PC-3 (cell line): ENCODE measurements at regions of chr17 and their contacts with region 1.

Region 1: DNA sequence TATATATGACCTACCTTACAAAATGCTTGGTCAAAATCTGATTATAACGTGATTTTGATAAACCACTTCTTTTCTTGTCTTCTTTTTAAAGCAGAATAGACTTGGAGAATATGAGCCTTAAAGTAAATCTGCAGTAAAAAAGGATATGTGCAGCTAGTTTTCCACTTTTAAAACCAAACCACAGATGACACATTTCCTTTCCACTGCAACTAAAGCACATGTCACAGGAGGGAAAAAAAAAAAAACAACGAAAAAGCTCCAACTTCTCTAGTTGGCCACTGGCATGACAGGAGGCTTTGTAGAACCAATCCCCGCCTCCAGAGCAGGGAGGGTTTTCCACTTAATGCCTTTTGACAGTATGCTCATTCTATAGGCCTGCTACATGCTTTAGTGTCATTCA is at the start of gene EVI2A:
- DNase-seq: peak; percentile 69
- ATAC-seq: peak; percentile 72
- H3K4me3 ChIP-seq: no peak within 1 kb of the TSS
- H3K27ac ChIP-seq: peak within 1 kb of the TSS; percentile 59
- H3K4me1 ChIP-seq: peaks cover 18% of the 10 kb centered on the region
- H3K27me3 ChIP-seq: no peaks in the 10 kb centered on the region
- CTCF ChIP-seq: no peak
- total RNA-seq, gene EVI2A: 0.92 TPM in 1 of 2 replicates, not detected in the other

Region 2: GRCh38 chr17:31175237-31175636 is 146.2 kb before region 1 on chr17:
- CTCF ChIA-PET with region 1: no interaction called
- POLR2A ChIA-PET with region 1: no interaction called
- intact Hi-C with region 1: no loop called
- DNase-seq: no peak
- ATAC-seq: no peak
- H3K4me3 ChIP-seq: no peak overlapping the region
- H3K27ac ChIP-seq: no peak overlapping the region
- H3K4me1 ChIP-seq: no peaks in the 10 kb centered on the region
- H3K27me3 ChIP-seq: no peaks in the 10 kb centered on the region
- CTCF ChIP-seq: no peak

Region 3: DNA sequence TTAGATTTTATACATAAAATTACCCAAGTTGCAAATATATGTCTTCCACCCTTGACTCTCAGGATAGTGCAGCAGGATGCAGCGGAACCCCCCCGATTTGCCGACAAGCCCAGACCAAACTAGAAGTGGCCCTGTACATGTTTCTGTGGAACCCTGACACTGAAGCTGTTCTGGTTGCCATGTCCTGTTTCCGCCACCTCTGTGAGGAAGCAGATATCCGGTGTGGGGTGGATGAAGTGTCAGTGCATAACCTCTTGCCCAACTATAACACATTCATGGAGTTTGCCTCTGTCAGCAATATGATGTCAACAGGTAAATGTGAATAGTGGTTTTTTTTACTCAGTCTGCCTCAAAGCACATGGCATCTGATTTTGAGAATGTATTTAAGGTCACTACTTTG is 95.1 kb before region 1 on chr17:
- CTCF ChIA-PET with region 1: no interaction called
- POLR2A ChIA-PET with region 1: no interaction called
- intact Hi-C with region 1: no loop called
- DNase-seq: no peak
- ATAC-seq: no peak
- H3K4me3 ChIP-seq: no peak overlapping the region
- H3K27ac ChIP-seq: no peak overlapping the region
- H3K4me1 ChIP-seq: no peaks in the 10 kb centered on the region
- H3K27me3 ChIP-seq: no peaks in the 10 kb centered on the region
- CTCF ChIP-seq: no peak

Region 4: GRCh38 chr17:31248986-31249834 is 72.3 kb before region 1 on chr17:
- CTCF ChIA-PET with region 1: no interaction called
- POLR2A ChIA-PET with region 1: no interaction called
- intact Hi-C with region 1: loop called (anchors 5 kb)
- DNase-seq: peak; percentile 70
- ATAC-seq: peak; percentile 96
- H3K4me3 ChIP-seq: no peak overlapping the region
- H3K27ac ChIP-seq: peak overlapping the region; percentile 48
- H3K4me1 ChIP-seq: peaks cover 30% of the 10 kb centered on the region
- H3K27me3 ChIP-seq: no peaks in the 10 kb centered on the region
- CTCF ChIP-seq: no peak

Region 5: GRCh38 chr17:31294820-31295488 is 26.5 kb before region 1 on chr17:
- CTCF ChIA-PET with region 1: no interaction called
- POLR2A ChIA-PET with region 1: no interaction called
- intact Hi-C with region 1: no loop called
- DNase-seq: no peak
- ATAC-seq: no peak
- H3K4me3 ChIP-seq: no peak overlapping the region
- H3K27ac ChIP-seq: no peak overlapping the region
- H3K4me1 ChIP-seq: peaks cover 5% of the 10 kb centered on the region
- H3K27me3 ChIP-seq: no peaks in the 10 kb centered on the region
- CTCF ChIP-seq: no peak

Region 6: GRCh38 chr17:31349454-31349853 is 28.0 kb after region 1 on chr17:
- CTCF ChIA-PET with region 1: no interaction called
- POLR2A ChIA-PET with region 1: no interaction called
- intact Hi-C with region 1: no loop called
- DNase-seq: no peak
- ATAC-seq: no peak
- H3K4me3 ChIP-seq: no peak overlapping the region
- H3K27ac ChIP-seq: no peak overlapping the region
- H3K4me1 ChIP-seq: no peaks in the 10 kb centered on the region
- H3K27me3 ChIP-seq: no peaks in the 10 kb centered on the region
- CTCF ChIP-seq: no peak

Region 7: GRCh38 chr17:31373150-31374093 is 51.9 kb after region 1 on chr17:
- CTCF ChIA-PET with region 1: no interaction called
- POLR2A ChIA-PET with region 1: no interaction called
- intact Hi-C with region 1: loop called (anchors 10 kb)
- DNase-seq: peak; percentile 62
- ATAC-seq: peak; percentile 70
- H3K4me3 ChIP-seq: no peak overlapping the region
- H3K27ac ChIP-seq: no peak overlapping the region
- H3K4me1 ChIP-seq: no peaks in the 10 kb centered on the region
- H3K27me3 ChIP-seq: no peaks in the 10 kb centered on the region
- CTCF ChIP-seq: peak; percentile 61